ENCODE measurements at regions of chr6 and their contacts with region 1.

Region 1: DNA sequence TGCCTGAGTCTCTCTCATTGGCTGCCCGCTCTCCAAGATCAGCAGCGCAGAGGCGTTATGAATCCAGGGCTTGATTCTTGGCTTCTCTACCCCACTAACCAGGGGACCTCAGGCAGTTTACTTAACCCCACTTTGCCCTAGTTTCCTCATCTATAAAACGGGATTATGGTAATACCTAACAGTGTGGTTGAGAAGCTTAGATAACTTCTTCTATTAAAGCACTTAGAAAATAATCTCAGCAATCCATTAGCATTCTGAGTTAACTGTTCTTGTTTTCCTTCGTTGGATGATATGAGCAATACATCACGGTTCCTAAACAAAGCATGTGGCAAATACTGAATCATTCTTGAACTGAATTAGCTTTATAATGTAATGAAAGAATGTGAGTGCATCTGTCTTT is 116.3 kb upstream of the FKBP1C start:
- DNase-seq: no peak
- H3K4me3 ChIP-seq: no peak overlapping the region
- H3K27ac ChIP-seq: no peak overlapping the region
- H3K4me1 ChIP-seq: no peaks in the 10 kb centered on the region
- H3K27me3 ChIP-seq: no peaks in the 10 kb centered on the region
- CTCF ChIP-seq: no peak
- EP300 ChIP-seq: no peak
- POLR2A ChIP-seq: no peak

Region 2: GRCh38 chr6:63063631-63064271 is 31.2 kb before region 1 on chr6:
- in situ Hi-C with region 1: no loop called
- intact Hi-C with region 1: loop called (anchors 1 kb)
- DNase-seq: no peak
- H3K4me3 ChIP-seq: no peak overlapping the region
- H3K27ac ChIP-seq: no peak overlapping the region
- H3K4me1 ChIP-seq: no peaks in the 10 kb centered on the region
- H3K27me3 ChIP-seq: no peaks in the 10 kb centered on the region
- CTCF ChIP-seq: no peak
- EP300 ChIP-seq: no peak
- POLR2A ChIP-seq: no peak

Measured in transverse colon (tissue), 4 donors.